ENCODE measurements at regions of chr1 and their contacts with region 1.

Region 1: GRCh38 chr1:147162093-147162492 is 10.2 kb downstream of the PRKAB2 start:
- DNase-seq: no peak
- CTCF ChIP-seq: no peak

Region 2: GRCh38 chr1:147129116-147129873 is 32.8 kb before region 1 on chr1:
- CTCF ChIA-PET with region 1: no interaction called
- POLR2A ChIA-PET with region 1: no interaction called
- DNase-seq: no peak
- CTCF ChIP-seq: no peak

Region 3: GRCh38 chr1:147172168-147172992 is 10.3 kb after region 1 on chr1 and contains the start of gene PRKAB2:
- CTCF ChIA-PET with region 1: interaction called, 10 read pairs
- POLR2A ChIA-PET with region 1: no interaction called
- DNase-seq: peak; percentile 94
- CTCF ChIP-seq: peak; percentile 95

Region 4: DNA sequence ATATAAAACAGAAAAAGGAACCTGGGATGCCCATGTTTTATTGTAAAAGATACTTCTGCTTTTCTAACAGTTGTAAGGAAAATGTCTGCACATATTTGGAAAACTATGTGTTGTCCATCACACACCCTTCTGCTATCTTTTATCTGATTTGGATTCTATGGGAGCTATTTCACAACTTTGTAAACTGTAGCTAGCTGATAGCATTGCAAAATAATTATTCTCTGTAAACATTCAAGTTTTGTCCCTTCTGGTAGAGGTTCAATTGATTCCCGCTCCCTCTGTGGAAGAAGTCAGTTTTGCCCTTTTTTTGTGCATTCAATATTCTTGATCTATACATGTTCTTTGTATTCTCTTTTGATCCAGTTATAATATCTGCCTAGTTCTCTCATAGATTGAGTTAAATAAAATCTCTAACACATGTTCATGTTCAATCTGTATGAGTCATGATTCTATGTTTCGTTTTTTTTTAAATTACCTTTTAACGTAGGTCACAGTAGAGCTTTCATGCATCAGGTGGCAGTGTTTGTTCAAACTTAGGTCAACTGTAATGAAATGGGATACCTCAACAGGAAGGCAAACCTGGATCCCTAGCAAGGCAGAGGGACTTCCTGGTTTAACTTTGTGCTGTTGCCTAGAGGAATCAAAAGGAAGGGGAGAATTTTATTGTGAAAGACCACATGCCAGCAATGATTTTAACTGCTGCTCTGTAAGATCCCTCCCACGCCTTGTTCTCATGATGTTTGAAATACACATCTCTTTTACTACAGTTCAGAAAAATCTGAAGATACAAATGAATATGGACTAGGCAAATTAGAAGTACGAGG is 353.2 kb after region 1 on chr1:
- CTCF ChIA-PET with region 1: no interaction called
- POLR2A ChIA-PET with region 1: no interaction called
- DNase-seq: no peak
- CTCF ChIP-seq: no peak